ENCODE measurements at regions of chr20 and their contacts with region 1.

Region 1: DNA sequence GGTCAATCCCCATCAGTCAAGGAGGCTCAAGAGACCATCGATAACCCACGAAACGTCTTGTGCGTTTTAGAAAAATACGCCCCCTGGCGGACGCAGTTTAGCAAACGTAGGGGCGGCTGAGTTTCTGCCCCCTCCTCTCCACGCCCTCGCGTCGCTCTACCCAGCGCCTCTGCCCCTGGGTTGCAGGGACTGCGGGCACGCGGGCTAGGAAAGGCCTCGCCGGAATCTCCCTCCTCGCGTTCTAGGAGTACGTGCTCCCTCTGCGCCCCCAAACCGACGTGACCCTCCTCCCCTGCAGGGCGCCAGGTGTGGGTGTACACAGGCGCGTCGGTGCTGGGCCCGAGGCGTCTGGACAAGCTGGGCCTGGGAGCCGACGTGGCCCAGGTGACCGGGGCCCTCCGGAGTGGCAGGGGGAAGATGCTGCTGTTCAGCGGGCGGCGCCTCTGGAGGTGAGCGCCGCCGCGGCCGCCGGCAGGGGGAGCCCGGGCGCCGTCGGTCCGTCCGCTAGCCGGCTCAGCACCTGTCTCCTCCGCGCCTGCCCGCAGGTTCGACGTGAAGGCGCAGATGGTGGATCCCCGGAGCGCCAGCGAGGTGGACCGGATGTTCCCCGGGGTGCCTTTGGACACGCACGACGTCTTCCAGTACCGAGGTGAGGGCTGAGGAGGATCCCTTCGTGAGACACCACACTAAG is 5.3 kb downstream of the MMP9 start:
- DNase-seq: peak; percentile 59 to 82 (median 64)
- H3K4me3 ChIP-seq: peak overlapping the region in 1 of 2 donors; percentile 33
- H3K4me3 Mint-ChIP-seq: peak overlapping the region; percentile 45 to 81 (median 64)
- H3K27ac ChIP-seq: no peak overlapping the region
- H3K27ac Mint-ChIP-seq: peak overlapping the region in 3 of 7 donors; percentile 54 to 78 (median 57)
- H3K4me1 ChIP-seq: peaks cover 50% of the 10 kb centered on the region
- H3K4me1 Mint-ChIP-seq: peaks cover 25 to 67% (median 45%) of the 10 kb centered on the region in 4 donors
- H3K27me3 ChIP-seq: peaks cover 30% of the 10 kb centered on the region
- H3K27me3 Mint-ChIP-seq: peaks cover 26 to 61% of the 10 kb centered on the region in 2 donors

Region 2: DNA sequence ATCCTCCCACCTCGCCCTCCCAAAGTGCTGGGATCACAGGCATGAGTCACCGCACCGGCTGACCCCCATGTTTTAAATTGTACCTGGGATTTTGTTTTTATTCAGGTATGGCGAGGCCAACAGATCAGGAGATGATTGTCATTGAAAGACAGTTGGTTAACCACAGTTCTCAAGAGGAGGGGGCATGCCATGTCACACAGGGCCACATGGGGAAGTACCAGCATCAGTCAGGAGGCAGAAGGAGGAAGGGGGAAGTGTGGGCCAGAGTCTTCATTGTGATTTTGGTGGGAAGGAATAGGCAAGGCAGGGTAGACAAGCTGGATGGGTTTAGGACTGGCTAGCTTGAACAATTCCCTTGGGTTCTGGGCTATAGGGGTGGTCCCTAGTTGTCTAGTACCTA is 15.2 kb before region 1 on chr20:
- CTCF ChIA-PET with region 1: interaction called, 47 read pairs
- POLR2A ChIA-PET with region 1: interaction called, 4 read pairs
- intact Hi-C with region 1: no loop called
- DNase-seq: peak in 3 of 5 donors; percentile 23 to 70 (median 41)
- H3K4me3 ChIP-seq: no peak overlapping the region
- H3K4me3 Mint-ChIP-seq: peak overlapping the region in 7 of 8 donors; percentile 3 to 92 (median 21)
- H3K27ac ChIP-seq: no peak overlapping the region
- H3K27ac Mint-ChIP-seq: peak overlapping the region; percentile 0 to 92 (median 28)
- H3K4me1 ChIP-seq: peaks cover 64% of the 10 kb centered on the region
- H3K4me1 Mint-ChIP-seq: peaks cover 40 to 82% (median 60%) of the 10 kb centered on the region in 4 donors
- H3K27me3 ChIP-seq: no peaks in the 10 kb centered on the region
- H3K27me3 Mint-ChIP-seq: no peaks in the 10 kb centered on the region

Region 3: GRCh38 chr20:46044896-46045295 is 30.9 kb after region 1 on chr20:
- CTCF ChIA-PET with region 1: no interaction called
- POLR2A ChIA-PET with region 1: no interaction called
- intact Hi-C with region 1: no loop called
- DNase-seq: no peak
- H3K4me3 ChIP-seq: no peak overlapping the region
- H3K4me3 Mint-ChIP-seq: no peak overlapping the region
- H3K27ac ChIP-seq: no peak overlapping the region
- H3K27ac Mint-ChIP-seq: no peak overlapping the region
- H3K4me1 ChIP-seq: no peaks in the 10 kb centered on the region
- H3K4me1 Mint-ChIP-seq: no peaks in the 10 kb centered on the region
- H3K27me3 ChIP-seq: peaks cover 4% of the 10 kb centered on the region
- H3K27me3 Mint-ChIP-seq: peaks cover 50 to 58% of the 10 kb centered on the region in 2 donors

Measured in CD4-positive, alpha-beta memory T cell (primary cell).